Activated CD8-positive, alpha-beta T cell treated with anti-CD3 and anti-CD28 coated beads for 36 hours (primary cell): ENCODE measurements at regions of chr11 and their contacts with region 1.

Region 1: GRCh38 chr11:117316197-117316961 is at the start of gene BACE1:
- DNase-seq: peak; percentile 27
- ATAC-seq: peak; percentile 45
- H3K4me3 Mint-ChIP-seq: peak within 1 kb of the TSS; percentile 51
- H3K27ac Mint-ChIP-seq: no peak within 1 kb of the TSS
- H3K4me1 Mint-ChIP-seq: peaks cover 4% of the 10 kb centered on the region
- H3K27me3 Mint-ChIP-seq: peaks cover 25% of the 10 kb centered on the region
- CTCF ChIP-seq: no peak
- total RNA-seq, gene BACE1: 0.97 to 1.5 TPM

Region 2: GRCh38 chr11:117327567-117328374 is 11.4 kb after region 1 on chr11 and contains the start of gene CEP164:
- CTCF ChIA-PET with region 1: interaction called, 10 read pairs
- POLR2A ChIA-PET with region 1: interaction called, 3 read pairs
- intact Hi-C with region 1: no loop called
- DNase-seq: peak; percentile 97
- ATAC-seq: peak; percentile 98
- H3K4me3 Mint-ChIP-seq: no peak within 1 kb of the TSS
- H3K27ac Mint-ChIP-seq: peak within 1 kb of the TSS; percentile 59
- H3K4me1 Mint-ChIP-seq: peaks cover 7% of the 10 kb centered on the region
- H3K27me3 Mint-ChIP-seq: no peaks in the 10 kb centered on the region
- CTCF ChIP-seq: no peak
- total RNA-seq, gene CEP164: 24.0 to 25.5 TPM